ENCODE measurements at regions of chr11 and their contacts with region 1.

Region 1: DNA sequence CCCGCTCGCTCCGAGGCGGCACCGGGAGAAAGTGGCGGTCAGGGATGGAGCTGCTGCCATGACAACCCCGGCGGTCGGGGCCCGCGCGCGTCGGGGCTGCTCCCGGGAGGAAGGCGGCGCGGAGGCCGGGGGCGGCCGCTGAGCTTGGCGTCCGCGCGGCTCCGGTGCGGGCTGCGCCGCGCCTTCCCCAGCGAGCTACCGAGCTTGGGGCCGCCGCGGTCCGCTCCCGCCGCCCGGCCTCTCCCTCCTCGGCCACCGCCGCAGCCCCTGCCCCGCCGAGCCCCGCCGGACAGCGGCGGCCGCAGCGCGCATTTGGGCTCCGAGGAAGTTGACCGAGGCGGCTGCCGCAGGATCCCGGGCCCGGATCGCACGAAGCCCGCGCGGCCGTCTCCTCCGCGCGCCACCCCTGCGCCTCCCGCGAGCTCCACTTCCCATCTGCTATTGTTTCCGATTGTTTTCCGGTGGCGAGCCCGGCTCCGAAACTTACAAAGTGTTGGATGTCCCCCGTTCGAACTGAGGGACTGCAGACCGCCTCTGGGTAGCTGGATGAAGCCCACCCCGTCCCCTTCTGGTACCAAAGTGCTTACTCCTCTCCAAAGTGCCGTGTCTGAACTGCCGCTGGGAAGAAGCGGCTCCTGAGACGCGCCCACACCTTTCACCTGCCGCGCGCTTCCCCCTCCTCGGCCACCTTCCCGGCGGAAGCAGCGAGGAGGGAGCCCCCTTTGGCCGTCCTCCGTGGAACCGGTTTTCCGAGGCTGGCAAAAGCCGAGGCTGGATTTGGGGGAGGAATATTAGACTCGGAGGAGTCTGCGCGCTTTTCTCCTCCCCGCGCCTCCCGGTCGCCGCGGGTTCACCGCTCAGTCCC is 540.3 kb downstream of the NTM start:
- DNase-seq: no peak
- H3K4me3 ChIP-seq: peak overlapping the region; percentile 82
- CTCF ChIP-seq: no peak

Region 2: DNA sequence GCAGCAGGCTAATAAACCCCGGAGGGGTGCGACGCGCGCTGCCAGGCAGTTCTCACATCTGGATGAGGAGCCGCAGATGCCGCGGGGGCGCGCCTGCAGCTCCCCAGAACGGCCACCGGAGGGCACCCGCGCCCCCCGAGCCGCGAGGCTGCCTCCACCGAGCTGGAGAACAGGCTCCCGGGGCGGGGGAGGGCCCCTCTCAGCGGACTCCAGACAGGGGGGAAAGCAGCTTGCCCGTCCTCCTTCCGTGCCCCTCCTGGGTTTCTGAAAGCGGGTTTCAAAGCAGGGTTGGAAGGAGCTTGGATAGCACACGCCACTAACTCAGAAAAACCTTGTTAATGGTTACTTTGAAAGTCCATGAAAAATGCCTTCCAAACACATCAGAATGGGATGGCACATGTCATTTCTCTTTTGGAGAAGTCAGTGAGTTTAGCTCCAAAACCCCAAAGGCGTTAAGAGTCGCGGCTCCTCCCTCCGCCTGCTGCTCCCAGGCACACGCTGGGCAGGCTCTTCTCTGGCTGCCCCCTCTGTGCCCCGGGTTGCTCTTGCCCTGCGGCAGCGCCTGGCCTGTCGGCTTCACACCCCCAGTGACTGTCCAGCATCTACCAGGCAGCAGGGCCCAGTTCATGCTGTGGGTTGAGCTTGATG is 222.6 kb before region 1 on chr11:
- CTCF ChIA-PET with region 1: interaction called, 138 read pairs
- POLR2A ChIA-PET with region 1: no interaction called
- DNase-seq: no peak
- H3K4me3 ChIP-seq: peak overlapping the region; percentile 43
- CTCF ChIP-seq: peak; percentile 96

Region 3: GRCh38 chr11:131889146-131889577 is 21.6 kb before region 1 on chr11:
- CTCF ChIA-PET with region 1: interaction called, 14 read pairs
- POLR2A ChIA-PET with region 1: no interaction called
- DNase-seq: peak; percentile 80
- H3K4me3 ChIP-seq: no peak overlapping the region
- CTCF ChIP-seq: no peak

Region 4: GRCh38 chr11:131899950-131900580 is 10.7 kb before region 1 on chr11:
- CTCF ChIA-PET with region 1: interaction called, 16 read pairs
- POLR2A ChIA-PET with region 1: no interaction called
- DNase-seq: no peak
- H3K4me3 ChIP-seq: no peak overlapping the region
- CTCF ChIP-seq: no peak

Region 5: GRCh38 chr11:131924457-131925201 is 13.9 kb after region 1 on chr11:
- CTCF ChIA-PET with region 1: interaction called, 51 read pairs
- POLR2A ChIA-PET with region 1: no interaction called
- DNase-seq: no peak
- H3K4me3 ChIP-seq: no peak overlapping the region
- CTCF ChIP-seq: no peak

Region 6: GRCh38 chr11:132028380-132029240 is 117.9 kb after region 1 on chr11:
- CTCF ChIA-PET with region 1: interaction called, 19 read pairs
- POLR2A ChIA-PET with region 1: no interaction called
- DNase-seq: no peak
- H3K4me3 ChIP-seq: no peak overlapping the region
- CTCF ChIP-seq: peak; percentile 61

Region 7: DNA sequence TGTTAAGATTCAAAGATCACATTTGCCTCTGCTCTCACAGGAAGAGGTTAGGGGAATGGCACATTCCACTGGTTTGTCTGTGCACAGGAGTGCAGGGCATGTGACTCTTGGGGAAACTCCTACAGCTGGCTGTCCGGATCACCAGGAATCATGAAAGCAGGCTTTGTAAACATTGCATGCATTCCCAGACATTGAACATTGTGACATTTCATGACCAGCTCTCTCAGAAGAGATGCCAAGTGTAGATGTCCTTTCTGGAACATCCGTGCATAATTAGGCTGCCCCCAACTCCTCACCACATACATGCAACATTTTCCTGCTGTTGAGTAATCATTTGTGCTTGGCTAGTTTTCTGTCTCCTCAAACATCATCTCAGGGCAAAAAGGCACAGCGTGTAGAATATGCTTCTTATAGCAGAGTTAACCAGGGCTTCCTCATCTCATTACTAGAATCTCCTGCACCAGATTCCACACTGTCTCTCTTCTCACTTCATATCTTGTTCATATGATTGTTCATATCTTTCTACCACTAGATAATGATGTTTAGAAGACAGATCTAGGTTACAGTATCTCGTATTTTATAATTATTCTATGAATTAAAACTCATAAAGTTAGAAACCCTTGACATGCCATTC is 154.3 kb after region 1 on chr11:
- CTCF ChIA-PET with region 1: interaction called, 12 read pairs
- POLR2A ChIA-PET with region 1: interaction called, 3 read pairs
- DNase-seq: peak; percentile 100
- H3K4me3 ChIP-seq: no peak overlapping the region
- CTCF ChIP-seq: no peak